HAP-1 (cell line): ENCODE measurements at regions of chr1 and their contacts with region 1.

Region 1: DNA sequence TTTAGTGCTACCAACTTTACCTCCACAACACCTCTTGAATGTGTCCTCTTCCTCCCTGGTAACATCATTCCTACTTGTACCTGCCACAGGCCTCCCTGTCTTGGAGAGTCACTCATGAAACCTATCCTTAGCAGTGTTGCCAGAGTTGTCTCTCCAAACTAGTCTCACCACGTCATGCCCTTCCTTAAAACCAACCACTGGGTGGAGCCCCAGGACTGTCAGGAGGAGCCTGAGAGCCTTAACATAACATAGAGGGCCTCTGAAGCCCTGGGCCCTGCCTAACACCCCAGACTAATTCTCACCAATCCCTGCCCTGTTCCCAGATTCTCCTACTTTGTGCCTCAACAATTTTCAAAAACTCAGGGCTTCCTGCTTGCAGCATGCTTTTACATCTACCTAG is 65.3 kb downstream of the ZNF697 start:
- DNase-seq: peak in 1 of 2 experiments; percentile 72
- H3K4me3 ChIP-seq: no peak overlapping the region
- H3K4me1 ChIP-seq: no peaks in the 10 kb centered on the region
- H3K27me3 ChIP-seq: no peaks in the 10 kb centered on the region

Region 2: GRCh38 chr1:119435052-119435451 is 147.7 kb before region 1 on chr1:
- in situ Hi-C with region 1: no loop called
- DNase-seq: no peak
- H3K4me3 ChIP-seq: no peak overlapping the region
- H3K4me1 ChIP-seq: no peaks in the 10 kb centered on the region
- H3K27me3 ChIP-seq: peaks cover 9% of the 10 kb centered on the region

Region 3: GRCh38 chr1:119808972-119809550 is 226.3 kb after region 1 on chr1:
- in situ Hi-C with region 1: loop called (anchors 25 kb)
- DNase-seq: peak; percentile 53 to 77
- H3K4me3 ChIP-seq: no peak overlapping the region
- H3K4me1 ChIP-seq: no peaks in the 10 kb centered on the region; the same call in 1 of the 2 replicates
- H3K27me3 ChIP-seq: peaks cover 25% of the 10 kb centered on the region